Activated CD4-positive, alpha-beta T cell treated with anti-CD3 and anti-CD28 coated beads for 36 hours (primary cell): ENCODE measurements at regions of chr7 and their contacts with region 1.

Region 1: GRCh38 chr7:117008883-117009531 is 55.7 kb downstream of the ST7 start:
- DNase-seq: peak; percentile 45
- ATAC-seq: peak; percentile 14
- H3K4me3 Mint-ChIP-seq: no peak overlapping the region
- H3K27ac Mint-ChIP-seq: no peak overlapping the region
- H3K4me1 Mint-ChIP-seq: peaks cover 67% of the 10 kb centered on the region
- H3K27me3 Mint-ChIP-seq: peaks cover 1% of the 10 kb centered on the region

Region 2: DNA sequence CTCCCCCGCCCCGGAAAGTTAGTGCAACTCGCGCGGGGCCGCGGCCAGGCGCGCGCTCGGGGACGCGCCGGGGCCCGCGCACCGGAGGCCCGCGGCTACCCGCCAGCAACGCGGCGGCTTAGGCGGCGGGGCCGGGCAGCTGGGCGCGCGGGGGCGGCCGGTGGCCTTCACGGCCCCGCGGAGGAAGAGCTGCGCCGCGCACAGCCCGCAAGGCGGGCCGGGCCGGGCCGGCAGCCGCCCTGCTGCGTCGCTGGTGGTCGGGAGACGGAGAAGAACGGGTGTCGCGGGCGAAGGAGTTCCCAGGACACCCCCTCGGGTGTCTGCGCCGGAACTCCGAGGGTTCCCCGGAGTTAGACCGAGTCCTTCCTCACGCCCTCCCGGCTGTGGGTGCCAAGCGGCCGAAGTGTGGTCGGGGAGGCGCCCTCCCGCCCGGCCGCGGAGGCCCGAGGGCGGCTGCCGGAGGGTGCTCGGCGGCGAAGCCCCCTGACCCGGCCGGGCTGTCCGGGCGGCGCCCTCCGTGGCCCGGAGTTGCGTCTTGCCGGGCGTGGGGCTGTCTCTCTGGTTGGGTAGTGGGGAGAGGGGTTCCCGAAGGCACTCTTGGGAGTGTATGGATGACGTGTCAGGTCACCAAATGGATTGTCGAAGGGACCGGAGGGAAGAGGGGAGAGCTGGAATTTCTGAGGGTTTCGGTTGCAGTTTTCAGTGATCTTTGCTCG is 55.1 kb before region 1 on chr7:
- CTCF ChIA-PET with region 1: interaction called, 3 read pairs
- POLR2A ChIA-PET with region 1: no interaction called
- intact Hi-C with region 1: loop called (anchors 1 to 2 kb)
- DNase-seq: peak; percentile 43
- ATAC-seq: peak; percentile 54
- H3K4me3 Mint-ChIP-seq: peak overlapping the region; percentile 93
- H3K27ac Mint-ChIP-seq: peak overlapping the region; percentile 97
- H3K4me1 Mint-ChIP-seq: peaks cover 31% of the 10 kb centered on the region
- H3K27me3 Mint-ChIP-seq: no peaks in the 10 kb centered on the region

Region 3: GRCh38 chr7:116971869-116972268 is 37.1 kb before region 1 on chr7:
- CTCF ChIA-PET with region 1: no interaction called
- POLR2A ChIA-PET with region 1: no interaction called
- intact Hi-C with region 1: no loop called
- DNase-seq: no peak
- ATAC-seq: no peak
- H3K4me3 Mint-ChIP-seq: no peak overlapping the region
- H3K27ac Mint-ChIP-seq: no peak overlapping the region
- H3K4me1 Mint-ChIP-seq: peaks cover 7% of the 10 kb centered on the region
- H3K27me3 Mint-ChIP-seq: no peaks in the 10 kb centered on the region

Region 4: DNA sequence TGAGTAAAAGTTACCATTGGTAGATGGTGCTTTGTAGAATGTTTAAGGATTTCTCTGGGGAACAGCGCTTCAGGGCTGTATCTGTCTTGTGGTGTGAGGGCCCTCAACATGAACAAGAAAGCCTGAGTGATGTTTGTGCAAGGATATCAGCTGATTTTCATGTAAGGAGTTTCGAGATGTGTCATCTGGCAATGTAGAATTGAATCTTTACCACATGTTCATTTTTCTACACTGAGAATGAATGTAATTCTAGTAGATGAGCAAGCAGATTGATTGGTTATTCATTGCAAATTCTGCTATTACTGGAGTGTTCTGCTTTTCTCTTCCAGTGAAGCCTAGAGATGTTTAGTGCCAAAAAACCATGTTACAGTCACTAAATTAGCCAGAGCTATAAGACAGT is 32.0 kb after region 1 on chr7:
- CTCF ChIA-PET with region 1: interaction called, 4 read pairs
- POLR2A ChIA-PET with region 1: no interaction called
- intact Hi-C with region 1: loop called (anchors 1 kb)
- DNase-seq: no peak
- ATAC-seq: peak; percentile 88
- H3K4me3 Mint-ChIP-seq: no peak overlapping the region
- H3K27ac Mint-ChIP-seq: no peak overlapping the region
- H3K4me1 Mint-ChIP-seq: peaks cover 9% of the 10 kb centered on the region
- H3K27me3 Mint-ChIP-seq: no peaks in the 10 kb centered on the region

Region 5: GRCh38 chr7:117110480-117111337 is 101.7 kb after region 1 on chr7:
- CTCF ChIA-PET with region 1: interaction called, 4 read pairs
- POLR2A ChIA-PET with region 1: interaction called, 6 read pairs
- intact Hi-C with region 1: loop called (anchors 2 kb)
- DNase-seq: peak; percentile 69
- ATAC-seq: peak; percentile 97
- H3K4me3 Mint-ChIP-seq: no peak overlapping the region
- H3K27ac Mint-ChIP-seq: peak overlapping the region; percentile 14
- H3K4me1 Mint-ChIP-seq: peaks cover 34% of the 10 kb centered on the region
- H3K27me3 Mint-ChIP-seq: no peaks in the 10 kb centered on the region

Region 6: GRCh38 chr7:117119192-117119924 is 110.4 kb after region 1 on chr7:
- CTCF ChIA-PET with region 1: interaction called, 10 read pairs
- POLR2A ChIA-PET with region 1: no interaction called
- intact Hi-C with region 1: loop called (anchors 1 to 2 kb)
- DNase-seq: peak; percentile 87
- ATAC-seq: no peak
- H3K4me3 Mint-ChIP-seq: no peak overlapping the region
- H3K27ac Mint-ChIP-seq: no peak overlapping the region
- H3K4me1 Mint-ChIP-seq: peaks cover under 1% of the 10 kb centered on the region
- H3K27me3 Mint-ChIP-seq: no peaks in the 10 kb centered on the region

Region 7: GRCh38 chr7:117127585-117128168 is 118.7 kb after region 1 on chr7:
- CTCF ChIA-PET with region 1: interaction called, 23 read pairs
- POLR2A ChIA-PET with region 1: interaction called, 4 read pairs
- intact Hi-C with region 1: loop called in 1 of 2 experiments (anchors 1 kb)
- DNase-seq: peak; percentile 72
- ATAC-seq: peak; percentile 40
- H3K4me3 Mint-ChIP-seq: no peak overlapping the region
- H3K27ac Mint-ChIP-seq: no peak overlapping the region
- H3K4me1 Mint-ChIP-seq: peaks cover 15% of the 10 kb centered on the region
- H3K27me3 Mint-ChIP-seq: no peaks in the 10 kb centered on the region

Region 8: GRCh38 chr7:117269417-117269816 is 260.4 kb after region 1 on chr7:
- CTCF ChIA-PET with region 1: no interaction called
- POLR2A ChIA-PET with region 1: no interaction called
- intact Hi-C with region 1: loop called in 1 of 2 experiments (anchors 1 kb)
- DNase-seq: no peak
- ATAC-seq: peak; percentile 99
- H3K4me3 Mint-ChIP-seq: no peak overlapping the region
- H3K27ac Mint-ChIP-seq: no peak overlapping the region
- H3K4me1 Mint-ChIP-seq: peaks cover 9% of the 10 kb centered on the region
- H3K27me3 Mint-ChIP-seq: peaks cover 9% of the 10 kb centered on the region